Endothelial cell of umbilical vein (primary cell): ENCODE measurements at regions of chr11 and their contacts with region 1.

Region 1: DNA sequence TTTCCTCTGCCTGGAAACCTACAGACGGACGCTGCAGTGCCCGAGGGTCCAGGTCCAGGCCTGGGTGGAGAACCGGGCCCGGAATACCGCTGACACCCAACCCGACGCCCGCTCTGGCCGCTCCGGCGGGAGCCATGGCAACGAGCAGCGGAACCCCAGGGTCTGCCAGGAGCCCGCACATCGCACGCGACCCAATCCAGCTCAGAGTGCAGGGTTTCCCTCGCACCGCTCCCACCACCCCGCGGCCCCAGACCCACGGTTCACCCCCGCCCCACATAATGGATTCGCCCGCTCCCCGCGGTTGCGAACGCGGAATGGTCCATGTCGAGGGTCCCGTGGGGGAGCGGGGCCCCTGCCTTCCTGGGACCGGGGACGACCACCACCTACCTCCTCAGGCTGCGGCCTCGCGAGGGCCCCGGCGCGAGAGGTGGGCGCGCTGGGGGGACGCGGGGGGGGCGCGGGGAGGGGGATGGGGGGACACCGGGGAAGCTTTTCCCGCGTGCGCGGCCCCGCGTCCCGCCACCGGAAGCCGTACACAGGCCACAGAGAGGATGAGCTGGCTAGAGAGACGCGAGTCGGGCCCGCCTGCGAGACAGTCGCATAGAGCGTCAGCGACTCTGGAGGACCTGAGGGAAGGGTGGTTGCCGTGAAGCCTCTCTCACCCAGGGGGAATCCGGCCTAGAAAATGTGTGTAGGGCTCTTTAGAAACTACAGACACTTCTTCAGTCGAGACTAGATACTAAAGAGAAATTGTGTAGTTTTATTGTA is at the start of gene SSRP1:
- DNase-seq: peak; percentile 77
- H3K4me3 ChIP-seq: peak within 1 kb of the TSS; percentile 58 to 82 (median 61)
- H3K27ac ChIP-seq: peak within 1 kb of the TSS; percentile 54
- H3K4me1 ChIP-seq: peaks cover 17% of the 10 kb centered on the region
- H3K27me3 ChIP-seq: peaks cover 4 to 9% of the 10 kb centered on the region in 2 experiments
- CTCF ChIP-seq: no peak
- POLR2A ChIP-seq: peak; percentile 82
- total RNA-seq, gene SSRP1: 140 and 146 TPM in 2 replicates

Region 2: GRCh38 chr11:56808326-56808725 is 527.2 kb before region 1 on chr11:
- CTCF ChIA-PET with region 1: no interaction called
- POLR2A ChIA-PET with region 1: no interaction called
- dilution Hi-C with region 1: no loop called
- intact Hi-C with region 1: no loop called
- DNase-seq: no peak
- H3K4me3 ChIP-seq: no peak overlapping the region
- H3K27ac ChIP-seq: no peak overlapping the region
- H3K4me1 ChIP-seq: no peaks in the 10 kb centered on the region
- H3K27me3 ChIP-seq: no peaks in the 10 kb centered on the region
- CTCF ChIP-seq: no peak
- POLR2A ChIP-seq: no peak

Region 3: DNA sequence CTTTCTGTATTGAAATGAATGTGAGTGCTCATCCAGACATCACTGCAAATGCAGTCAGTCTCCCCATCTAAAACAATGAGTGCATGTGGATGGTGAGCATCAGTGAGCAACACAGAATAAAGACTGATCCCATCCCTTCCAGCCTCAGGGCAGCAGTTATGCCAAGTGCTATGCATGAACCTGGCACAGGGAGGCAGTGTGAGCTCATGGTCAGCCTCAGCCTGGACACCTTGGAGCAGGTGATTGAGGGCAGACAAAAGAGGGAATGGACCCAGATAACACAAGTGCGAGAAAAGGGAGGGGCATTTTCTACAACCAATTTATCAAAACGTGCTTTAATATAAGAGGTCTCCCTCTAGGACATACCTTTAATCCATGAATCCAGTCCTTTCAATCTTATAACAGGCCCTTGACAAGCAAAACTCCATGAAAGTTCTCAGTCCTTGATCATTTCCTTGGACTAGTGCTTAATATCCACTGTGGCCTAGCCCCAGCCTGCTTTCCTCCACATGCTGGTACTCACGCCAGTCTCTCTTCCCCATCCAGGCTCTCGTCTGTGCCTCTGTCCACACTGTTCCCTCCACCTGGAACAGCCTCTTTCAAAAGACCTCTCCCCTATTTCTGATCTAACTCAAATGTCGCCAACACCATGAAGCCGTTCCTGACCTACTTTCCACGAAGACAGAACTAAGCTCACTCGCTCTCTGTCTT is 204.3 kb before region 1 on chr11:
- CTCF ChIA-PET with region 1: interaction called, 3 read pairs
- POLR2A ChIA-PET with region 1: no interaction called
- dilution Hi-C with region 1: no loop called
- intact Hi-C with region 1: loop called (anchors 1 kb)
- DNase-seq: peak; percentile 47
- H3K4me3 ChIP-seq: no peak overlapping the region
- H3K27ac ChIP-seq: no peak overlapping the region
- H3K4me1 ChIP-seq: peaks cover 4% of the 10 kb centered on the region
- H3K27me3 ChIP-seq: peaks cover 0 to 2% of the 10 kb centered on the region in 2 experiments
- CTCF ChIP-seq: peak; percentile 43 to 70
- POLR2A ChIP-seq: no peak

Region 4: GRCh38 chr11:57311109-57311936 is 24.2 kb before region 1 on chr11:
- CTCF ChIA-PET with region 1: interaction called, 6 read pairs
- POLR2A ChIA-PET with region 1: no interaction called
- dilution Hi-C with region 1: no loop called
- intact Hi-C with region 1: loop called (anchors 1 kb)
- DNase-seq: peak; percentile 96
- H3K4me3 ChIP-seq: peak overlapping the region; percentile 0 to 56 (median 24)
- H3K27ac ChIP-seq: peak overlapping the region; percentile 53
- H3K4me1 ChIP-seq: peaks cover 18% of the 10 kb centered on the region
- H3K27me3 ChIP-seq: no peaks in the 10 kb centered on the region
- CTCF ChIP-seq: no peak
- POLR2A ChIP-seq: peak; percentile 81

Region 5: DNA sequence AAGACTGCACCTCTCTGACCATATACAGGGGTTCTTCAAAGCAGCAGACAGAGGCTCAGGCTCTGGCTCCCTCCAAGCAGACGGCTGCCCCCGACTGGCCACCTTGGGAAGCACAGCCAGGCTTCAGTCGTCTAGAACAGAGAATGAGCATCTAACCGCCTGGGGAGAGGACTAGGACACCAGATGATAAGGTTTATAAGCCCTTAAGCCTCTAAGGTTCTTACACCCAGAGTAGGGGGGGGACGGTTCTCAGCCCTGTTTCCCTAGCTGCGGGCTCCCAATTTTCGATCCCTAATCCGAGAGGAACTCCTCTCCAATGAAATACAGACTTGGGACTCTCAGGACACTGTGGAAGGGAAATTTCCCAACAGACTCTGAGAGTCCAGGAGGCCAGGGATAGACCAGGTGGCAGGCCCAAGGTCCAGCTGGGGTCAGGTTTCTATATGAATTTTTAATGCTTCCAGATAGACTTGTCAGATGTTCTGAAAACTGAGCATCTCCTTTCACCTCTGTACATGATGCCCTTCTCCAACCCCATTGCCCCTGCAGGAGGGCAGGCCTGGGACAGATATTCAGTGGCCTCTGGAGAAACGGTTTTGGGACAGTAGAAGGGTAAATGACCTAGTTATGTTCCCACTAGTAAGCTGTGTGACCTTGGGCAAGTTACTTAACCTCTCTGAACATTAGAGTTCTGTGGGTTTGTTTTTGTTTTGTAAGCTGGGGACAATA is 145.0 kb after region 1 on chr11:
- CTCF ChIA-PET with region 1: no interaction called
- POLR2A ChIA-PET with region 1: no interaction called
- dilution Hi-C with region 1: no loop called
- intact Hi-C with region 1: no loop called
- DNase-seq: peak; percentile 46
- H3K4me3 ChIP-seq: no peak overlapping the region
- H3K27ac ChIP-seq: no peak overlapping the region
- H3K4me1 ChIP-seq: peaks cover 9% of the 10 kb centered on the region
- H3K27me3 ChIP-seq: peaks cover 7 to 28% of the 10 kb centered on the region in 2 experiments
- CTCF ChIP-seq: peak; percentile 75 to 85
- POLR2A ChIP-seq: no peak